ENCODE measurements at regions of chr11 and their contacts with region 1.

Region 1: GRCh38 chr11:80621871-80622270 is 1181.0 kb upstream of the TENM4 start:
- DNase-seq: no peak
- ATAC-seq: no peak
- H3K4me3 ChIP-seq: no peak overlapping the region
- H3K27ac ChIP-seq: no peak overlapping the region
- H3K4me1 ChIP-seq: no peaks in the 10 kb centered on the region
- H3K27me3 ChIP-seq: no peaks in the 10 kb centered on the region
- CTCF ChIP-seq: no peak

Region 2: DNA sequence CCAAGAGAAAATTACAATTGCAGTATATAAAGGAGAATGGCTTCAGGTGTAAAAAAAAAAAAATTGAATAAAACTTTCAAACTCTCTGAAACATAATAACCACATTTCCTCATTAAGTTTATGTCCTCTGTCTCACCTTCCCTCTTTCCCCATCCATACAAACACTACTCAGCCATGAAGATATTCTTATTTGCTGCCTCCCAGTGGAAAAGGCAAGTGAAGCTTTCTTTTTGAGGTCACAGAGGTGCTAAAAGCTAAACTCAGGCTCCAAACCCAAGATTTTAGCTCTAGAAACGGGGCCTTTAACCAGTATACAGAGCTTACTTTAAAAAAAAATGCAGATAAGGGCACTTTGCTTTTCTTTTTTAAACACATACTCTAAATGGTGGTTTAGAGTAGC is 543.3 kb after region 1 on chr11:
- CTCF ChIA-PET with region 1: no interaction called
- POLR2A ChIA-PET with region 1: no interaction called
- in situ Hi-C with region 1: no loop called
- intact Hi-C with region 1: no loop called
- DNase-seq: no peak
- ATAC-seq: no peak
- H3K4me3 ChIP-seq: no peak overlapping the region
- H3K27ac ChIP-seq: no peak overlapping the region
- H3K4me1 ChIP-seq: no peaks in the 10 kb centered on the region
- H3K27me3 ChIP-seq: no peaks in the 10 kb centered on the region
- CTCF ChIP-seq: peak; percentile 40; the same call in 1 of the 2 replicates

Region 3: GRCh38 chr11:81237139-81237538 is 615.3 kb after region 1 on chr11:
- CTCF ChIA-PET with region 1: no interaction called
- POLR2A ChIA-PET with region 1: interaction called, 13 read pairs
- in situ Hi-C with region 1: no loop called
- intact Hi-C with region 1: no loop called
- DNase-seq: peak; percentile 46
- ATAC-seq: peak; percentile 95
- H3K4me3 ChIP-seq: no peak overlapping the region
- H3K27ac ChIP-seq: no peak overlapping the region
- H3K4me1 ChIP-seq: peaks cover 3% of the 10 kb centered on the region; the same call in 1 of the 2 replicates
- H3K27me3 ChIP-seq: no peaks in the 10 kb centered on the region
- CTCF ChIP-seq: peak; percentile 65; the same call in 1 of the 2 replicates